Endothelial cell of umbilical vein (primary cell): ENCODE measurements at regions of chrX and their contacts with region 1.

Region 1: DNA sequence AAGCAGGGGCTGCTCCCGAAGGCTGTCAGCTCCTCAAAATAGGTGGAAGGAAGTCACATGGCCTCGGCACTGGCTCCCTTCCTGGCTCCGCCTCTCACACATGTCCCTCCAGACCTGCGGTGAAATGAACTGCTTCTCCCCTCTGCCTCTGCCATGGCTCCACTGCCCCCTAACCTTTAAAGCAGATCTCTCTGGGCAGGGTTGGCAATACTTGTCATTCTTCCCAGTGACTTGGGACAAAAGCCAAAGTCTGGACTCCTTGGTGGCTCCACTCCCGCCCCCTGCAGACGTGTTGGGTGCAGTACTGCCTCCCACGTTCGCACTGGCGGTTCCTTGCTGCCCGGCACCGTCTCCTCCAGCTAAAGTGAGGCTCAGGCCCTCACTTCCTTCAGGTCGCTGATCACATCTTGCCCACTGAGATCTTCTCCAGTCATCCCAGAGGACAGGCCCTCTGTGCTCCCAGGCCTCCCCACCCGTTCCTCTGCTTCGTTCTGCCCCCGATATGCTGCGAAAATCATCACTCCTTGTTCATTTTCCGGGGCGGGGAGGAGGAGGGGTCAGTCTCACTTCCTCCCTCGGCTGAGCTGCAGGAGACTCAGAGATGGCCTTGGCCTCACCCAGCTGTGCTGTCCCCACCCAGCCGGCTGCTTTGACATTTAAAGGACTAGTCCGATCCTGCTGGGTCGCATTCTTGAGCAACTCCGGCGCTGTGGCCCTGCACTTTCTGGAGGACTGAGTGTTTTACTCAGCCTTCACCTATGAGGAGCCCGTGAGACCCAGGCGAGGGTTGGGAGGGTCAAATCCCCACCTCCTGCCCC is 97.4 kb downstream of the PHKA2 start:
- DNase-seq: peak; percentile 59
- H3K4me3 ChIP-seq: peak overlapping the region in 1 of 3 experiments; percentile 21
- H3K27ac ChIP-seq: no peak overlapping the region
- H3K4me1 ChIP-seq: peaks cover 12% of the 10 kb centered on the region
- H3K27me3 ChIP-seq: no peaks in the 10 kb centered on the region
- CTCF ChIP-seq: peak; percentile 43 to 66
- POLR2A ChIP-seq: no peak

Region 2: DNA sequence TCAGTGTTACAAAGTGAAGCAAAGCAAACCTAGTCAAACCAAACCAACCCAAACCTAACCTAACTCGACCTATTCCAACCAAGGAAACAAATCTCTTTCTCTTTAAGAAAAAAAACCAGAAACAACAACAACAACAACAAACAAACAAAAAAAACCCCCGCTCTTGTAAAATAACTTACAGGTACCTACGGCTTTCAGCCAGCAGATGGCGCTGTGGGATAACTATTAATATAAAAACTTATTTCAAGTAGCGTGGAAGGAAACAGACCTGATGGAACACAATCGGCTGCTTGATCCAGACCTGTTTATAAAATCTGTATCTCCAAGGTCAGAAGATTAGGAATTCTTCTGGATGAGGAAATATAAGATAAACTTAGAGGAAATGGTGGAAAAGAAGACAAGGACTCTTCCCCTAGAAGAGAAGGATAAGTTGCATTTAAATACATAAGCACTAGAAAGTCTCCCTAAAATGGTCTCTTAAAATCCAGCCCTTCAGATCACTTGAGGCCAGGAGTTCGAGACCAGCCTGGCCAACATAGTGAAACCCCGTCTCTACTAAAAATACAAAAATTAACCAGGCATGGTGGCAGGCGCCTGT is 495.5 kb before region 1 on chrX:
- CTCF ChIA-PET with region 1: no interaction called
- POLR2A ChIA-PET with region 1: no interaction called
- dilution Hi-C with region 1: no loop called
- intact Hi-C with region 1: loop called (anchors 1 kb)
- DNase-seq: peak; percentile 49
- H3K4me3 ChIP-seq: no peak overlapping the region
- H3K27ac ChIP-seq: no peak overlapping the region
- H3K4me1 ChIP-seq: no peaks in the 10 kb centered on the region
- H3K27me3 ChIP-seq: no peaks in the 10 kb centered on the region
- CTCF ChIP-seq: peak; percentile 26 to 33
- POLR2A ChIP-seq: no peak

Region 3: DNA sequence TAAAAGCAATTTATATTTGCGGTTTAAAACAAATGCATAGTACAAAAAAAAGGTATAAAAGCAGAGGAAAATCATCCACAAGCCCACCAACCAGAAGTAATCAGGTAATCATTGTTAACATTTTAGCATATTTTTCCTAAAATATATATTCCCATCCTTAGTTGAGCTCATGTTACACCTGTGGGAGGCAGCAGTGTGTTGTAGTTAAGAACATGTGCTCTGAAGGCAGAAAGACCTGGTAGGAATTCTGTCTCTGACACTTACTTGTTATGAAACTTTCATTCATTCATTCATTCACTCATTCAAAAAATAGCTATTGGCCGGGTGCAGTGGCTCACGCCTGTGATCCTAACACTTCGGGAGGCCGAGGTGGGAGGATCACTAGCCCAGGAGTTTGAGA is 476.5 kb before region 1 on chrX:
- CTCF ChIA-PET with region 1: interaction called, 5 read pairs
- POLR2A ChIA-PET with region 1: no interaction called
- dilution Hi-C with region 1: no loop called
- intact Hi-C with region 1: loop called (anchors 5 kb)
- DNase-seq: peak; percentile 17
- H3K4me3 ChIP-seq: no peak overlapping the region
- H3K27ac ChIP-seq: no peak overlapping the region
- H3K4me1 ChIP-seq: no peaks in the 10 kb centered on the region
- H3K27me3 ChIP-seq: no peaks in the 10 kb centered on the region
- CTCF ChIP-seq: peak in 1 of 2 donors; percentile 3
- POLR2A ChIP-seq: no peak

Region 4: DNA sequence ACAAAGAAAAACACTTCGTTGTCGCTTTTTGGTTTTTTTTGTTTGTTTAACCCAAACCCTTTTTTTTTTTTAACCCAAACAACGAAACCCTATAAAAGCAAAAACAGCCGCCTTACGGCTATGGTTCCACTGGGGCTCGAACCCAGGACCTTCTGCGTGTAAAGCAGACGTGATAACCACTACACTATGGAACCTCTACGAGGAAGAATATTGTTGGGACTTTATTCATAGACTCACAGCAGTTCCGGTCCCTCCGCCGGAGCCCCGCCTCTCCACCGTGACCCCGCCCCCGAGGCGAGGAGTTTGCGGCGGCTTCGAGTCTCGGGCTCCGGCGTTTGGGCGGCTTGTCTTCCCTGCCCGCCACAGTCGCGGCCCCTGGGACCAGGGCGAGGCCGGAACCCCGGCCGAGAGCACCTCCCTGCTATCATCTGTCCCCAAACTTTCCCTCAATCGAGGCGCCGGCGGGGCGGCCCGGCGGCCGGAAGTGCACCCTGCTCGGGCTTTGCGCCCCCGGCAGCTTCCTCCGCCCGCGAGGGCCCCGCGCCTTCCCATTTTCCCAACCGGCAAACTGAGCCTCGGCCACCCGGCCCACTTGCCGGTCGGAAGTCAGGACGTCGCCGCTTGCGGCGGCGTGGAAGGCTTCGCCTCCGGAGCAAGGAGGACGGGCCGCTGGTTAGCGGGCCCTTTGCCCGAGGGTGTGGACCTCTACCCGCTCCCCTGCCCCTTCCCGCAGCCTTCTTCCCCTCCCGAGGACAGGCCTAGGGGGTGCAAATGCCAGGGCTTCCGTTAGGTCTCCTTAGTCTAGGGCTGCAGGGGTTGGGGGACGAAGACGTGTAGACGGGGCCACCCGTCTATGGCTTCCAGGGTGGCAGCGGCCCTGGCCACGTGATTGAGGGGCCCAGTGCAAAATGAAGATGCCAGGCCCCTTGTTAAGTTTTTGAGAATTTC is 211.5 kb before region 1 on chrX:
- CTCF ChIA-PET with region 1: no interaction called
- POLR2A ChIA-PET with region 1: no interaction called
- dilution Hi-C with region 1: no loop called
- intact Hi-C with region 1: loop called (anchors 5 kb)
- DNase-seq: peak; percentile 80
- H3K4me3 ChIP-seq: peak overlapping the region; percentile 63 to 76 (median 70)
- H3K27ac ChIP-seq: peak overlapping the region; percentile 60
- H3K4me1 ChIP-seq: no peaks in the 10 kb centered on the region
- H3K27me3 ChIP-seq: no peaks in the 10 kb centered on the region
- CTCF ChIP-seq: no peak
- POLR2A ChIP-seq: no peak

Region 5: GRCh38 chrX:18702362-18703195 is 184.0 kb before region 1 on chrX:
- CTCF ChIA-PET with region 1: no interaction called
- POLR2A ChIA-PET with region 1: no interaction called
- dilution Hi-C with region 1: no loop called
- intact Hi-C with region 1: loop called (anchors 2 kb)
- DNase-seq: peak; percentile 67
- H3K4me3 ChIP-seq: no peak overlapping the region
- H3K27ac ChIP-seq: peak overlapping the region; percentile 24
- H3K4me1 ChIP-seq: peaks cover 14% of the 10 kb centered on the region
- H3K27me3 ChIP-seq: peaks cover 0 to 2% of the 10 kb centered on the region in 2 experiments
- CTCF ChIP-seq: no peak
- POLR2A ChIP-seq: no peak